CD4-positive, alpha-beta memory T cell (primary cell): ENCODE measurements at regions of chrX and their contacts with region 1.

Region 1: DNA sequence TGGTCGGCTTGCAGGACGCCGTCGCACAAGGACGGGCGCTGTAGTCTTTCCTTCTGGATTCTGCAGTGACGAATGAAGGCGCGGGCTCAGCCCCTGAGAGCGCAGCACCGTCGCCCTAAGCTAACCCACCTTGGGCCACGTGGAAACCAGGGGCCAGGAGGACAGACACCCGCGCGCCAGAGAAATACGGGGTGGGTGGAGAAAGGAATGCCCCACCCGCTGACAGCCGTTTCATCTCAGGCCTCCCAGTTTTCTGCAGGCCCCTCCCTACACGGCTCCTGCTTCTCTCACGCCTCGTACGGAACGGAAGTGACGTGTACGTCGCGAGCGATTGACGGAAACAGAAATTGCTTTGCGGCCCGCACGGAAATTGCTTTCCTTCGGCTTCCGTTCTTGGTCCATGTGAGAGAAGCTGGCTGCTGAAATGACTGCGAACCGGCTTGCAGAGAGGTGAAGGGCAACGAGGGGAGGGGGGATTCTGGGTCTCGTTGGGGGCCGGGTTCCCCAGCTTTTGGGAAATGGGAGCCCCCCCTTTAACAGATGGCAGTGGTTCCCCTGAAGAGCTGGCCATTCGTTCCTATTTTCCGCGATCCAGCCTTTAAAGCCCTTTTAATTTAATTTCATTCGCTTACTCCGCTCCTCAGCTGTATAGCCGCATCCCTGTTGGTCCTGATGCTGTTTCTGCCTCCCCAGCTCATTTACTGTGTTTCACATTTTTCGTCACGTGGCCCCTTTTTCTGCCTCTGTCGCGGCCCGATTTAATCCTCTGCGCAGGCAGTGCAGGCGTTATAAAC is at the start of gene UTP14A:
- DNase-seq: peak; percentile 76 to 89 (median 82)
- H3K4me3 ChIP-seq: peak within 1 kb of the TSS; percentile 52 to 78
- H3K4me3 Mint-ChIP-seq: peak within 1 kb of the TSS; percentile 90 to 95 (median 92)
- H3K27ac ChIP-seq: peak within 1 kb of the TSS; percentile 58
- H3K27ac Mint-ChIP-seq: peak within 1 kb of the TSS; percentile 75 to 96 (median 89)
- H3K4me1 ChIP-seq: peaks cover 9% of the 10 kb centered on the region
- H3K4me1 Mint-ChIP-seq: peaks cover 0 to 16% (median 7%) of the 10 kb centered on the region in 4 donors
- H3K27me3 ChIP-seq: no peaks in the 10 kb centered on the region
- H3K27me3 Mint-ChIP-seq: no peaks in the 10 kb centered on the region
- total RNA-seq, gene UTP14A: 17.7 to 19.2 TPM

Region 2: DNA sequence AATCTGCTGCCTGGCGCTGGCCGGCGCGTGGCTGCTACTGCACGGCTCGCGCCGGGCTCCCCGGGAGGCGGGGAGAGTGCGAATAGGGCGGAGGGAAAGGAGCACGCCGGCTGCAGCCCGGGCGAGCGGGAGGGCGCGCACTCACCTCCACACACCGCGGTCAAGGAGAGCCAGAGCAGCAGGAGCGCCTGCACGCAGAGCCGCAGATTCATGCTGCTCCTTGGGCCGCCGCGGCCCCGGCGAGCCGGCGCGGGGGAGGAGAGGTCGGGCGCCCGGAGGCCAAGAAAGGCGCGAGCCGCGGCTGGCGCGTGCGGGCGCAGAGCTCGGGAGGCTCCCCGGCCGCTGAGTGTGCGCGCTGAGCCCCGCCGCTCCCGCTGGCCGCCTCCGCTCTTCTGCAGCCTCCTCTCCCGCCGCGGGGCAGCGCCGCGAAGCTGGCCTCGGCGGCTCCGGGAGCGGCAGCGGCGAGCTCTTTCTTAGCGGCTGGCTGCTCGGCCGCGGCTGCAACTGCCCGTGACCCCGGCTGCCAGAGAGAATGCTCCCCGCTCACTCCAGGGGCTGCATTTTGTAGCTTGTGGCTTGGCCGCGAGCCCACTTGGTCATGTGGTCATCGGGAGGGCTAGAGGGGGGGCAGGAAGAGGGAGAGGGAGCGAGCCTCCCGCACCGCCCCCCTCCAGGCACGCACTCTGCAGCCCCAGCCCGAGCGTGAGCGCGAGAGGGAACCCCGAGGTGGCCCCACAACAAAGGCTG is 251.4 kb before region 1 on chrX and contains the start of gene APLN:
- CTCF ChIA-PET with region 1: no interaction called
- POLR2A ChIA-PET with region 1: no interaction called
- intact Hi-C with region 1: loop called (anchors 1 kb)
- DNase-seq: peak in 3 of 5 donors; percentile 11 to 16 (median 14)
- H3K4me3 ChIP-seq: no peak within 1 kb of the TSS
- H3K4me3 Mint-ChIP-seq: peak within 1 kb of the TSS; percentile 53 to 76 (median 74)
- H3K27ac ChIP-seq: no peak within 1 kb of the TSS
- H3K27ac Mint-ChIP-seq: no peak within 1 kb of the TSS
- H3K4me1 ChIP-seq: peaks cover 10% of the 10 kb centered on the region
- H3K4me1 Mint-ChIP-seq: peaks cover 3 to 9% (median 6%) of the 10 kb centered on the region in 4 donors
- H3K27me3 ChIP-seq: peaks cover 4% of the 10 kb centered on the region
- H3K27me3 Mint-ChIP-seq: peaks cover 0 to 5% of the 10 kb centered on the region in 2 donors
- total RNA-seq, gene APLN: not detected

Region 3: DNA sequence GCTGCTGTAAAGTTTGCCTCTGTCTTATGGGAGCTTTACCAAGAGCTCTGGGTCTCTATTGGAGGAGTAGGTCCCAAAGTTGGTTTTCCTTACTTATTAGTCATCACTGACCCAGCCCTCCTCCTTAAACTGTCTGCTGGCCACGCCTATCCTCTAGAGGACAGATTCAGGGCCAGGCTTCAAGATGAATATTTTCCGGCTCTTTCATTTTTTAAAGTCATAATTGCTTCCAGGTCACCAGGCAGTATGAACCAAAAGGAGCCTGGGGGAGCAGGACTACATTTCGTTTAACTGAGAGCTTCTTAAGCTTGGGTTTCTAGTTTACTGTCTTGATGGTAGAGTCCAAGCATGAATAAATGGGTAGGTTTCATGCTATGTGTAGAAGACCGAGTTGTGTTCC is 90.1 kb after region 1 on chrX:
- CTCF ChIA-PET with region 1: no interaction called
- POLR2A ChIA-PET with region 1: no interaction called
- intact Hi-C with region 1: no loop called
- DNase-seq: no peak
- H3K4me3 ChIP-seq: no peak overlapping the region
- H3K4me3 Mint-ChIP-seq: no peak overlapping the region
- H3K27ac ChIP-seq: no peak overlapping the region
- H3K27ac Mint-ChIP-seq: no peak overlapping the region
- H3K4me1 ChIP-seq: no peaks in the 10 kb centered on the region
- H3K4me1 Mint-ChIP-seq: peaks cover 5 to 13% (median 5%) of the 10 kb centered on the region in 4 donors
- H3K27me3 ChIP-seq: no peaks in the 10 kb centered on the region
- H3K27me3 Mint-ChIP-seq: no peaks in the 10 kb centered on the region